ENCODE measurements at regions of chr9 and their contacts with region 1.

Region 1: GRCh38 chr9:85155352-85155751 is 485.8 kb downstream of the NTRK2 start:
- DNase-seq: no peak
- H3K4me3 ChIP-seq: no peak overlapping the region
- H3K27ac ChIP-seq: no peak overlapping the region
- H3K27me3 ChIP-seq: no peaks in the 10 kb centered on the region
- CTCF ChIP-seq: no peak

Region 2: DNA sequence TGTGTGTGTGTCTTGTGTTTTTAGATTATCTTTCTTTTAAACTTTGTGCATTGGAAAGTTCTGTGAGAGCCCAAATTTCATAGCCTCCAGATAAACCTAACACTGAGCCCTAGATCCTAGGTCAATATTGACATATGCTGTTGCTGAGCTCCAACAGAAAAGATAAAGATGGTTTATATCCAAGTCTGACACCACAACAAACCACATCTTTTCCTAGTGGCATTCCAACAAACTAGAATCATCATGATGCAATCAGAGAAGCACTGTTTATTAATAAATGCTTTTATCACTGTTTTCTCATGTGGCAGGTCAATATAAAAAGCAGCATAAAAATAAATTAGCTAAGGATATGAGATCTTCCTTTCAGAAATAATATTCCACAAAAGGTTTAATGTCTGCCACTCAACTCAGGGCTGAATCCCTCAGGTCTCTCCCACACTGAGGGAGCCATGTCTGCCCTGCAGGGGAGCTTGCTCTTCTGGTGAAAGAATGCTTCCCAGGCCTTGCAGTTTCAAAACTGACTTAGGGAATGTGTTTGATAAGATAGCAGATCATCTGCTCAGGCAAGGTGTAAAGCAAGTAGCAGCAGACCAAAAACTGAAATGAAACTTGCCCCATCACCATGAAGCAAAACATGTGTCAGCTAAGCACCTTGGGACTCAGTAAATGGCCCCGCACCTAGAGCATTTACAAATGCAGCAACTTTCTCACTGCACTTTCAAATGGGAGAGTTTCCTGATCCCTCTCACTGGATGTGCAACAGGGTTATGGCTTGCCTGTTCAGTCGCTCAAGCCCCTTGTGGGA is 93.4 kb after region 1 on chr9:
- intact Hi-C with region 1: loop called in 1 of 2 experiments (anchors 10 kb)
- DNase-seq: no peak
- H3K4me3 ChIP-seq: no peak overlapping the region
- H3K27ac ChIP-seq: peak overlapping the region in 1 of 59 donors; percentile 9
- H3K27me3 ChIP-seq: no peaks in the 10 kb centered on the region
- CTCF ChIP-seq: no peak

Measured in dorsolateral prefrontal cortex (tissue), 120 donors.